ENCODE measurements at regions of chr1 and their contacts with region 1.

Region 1: DNA sequence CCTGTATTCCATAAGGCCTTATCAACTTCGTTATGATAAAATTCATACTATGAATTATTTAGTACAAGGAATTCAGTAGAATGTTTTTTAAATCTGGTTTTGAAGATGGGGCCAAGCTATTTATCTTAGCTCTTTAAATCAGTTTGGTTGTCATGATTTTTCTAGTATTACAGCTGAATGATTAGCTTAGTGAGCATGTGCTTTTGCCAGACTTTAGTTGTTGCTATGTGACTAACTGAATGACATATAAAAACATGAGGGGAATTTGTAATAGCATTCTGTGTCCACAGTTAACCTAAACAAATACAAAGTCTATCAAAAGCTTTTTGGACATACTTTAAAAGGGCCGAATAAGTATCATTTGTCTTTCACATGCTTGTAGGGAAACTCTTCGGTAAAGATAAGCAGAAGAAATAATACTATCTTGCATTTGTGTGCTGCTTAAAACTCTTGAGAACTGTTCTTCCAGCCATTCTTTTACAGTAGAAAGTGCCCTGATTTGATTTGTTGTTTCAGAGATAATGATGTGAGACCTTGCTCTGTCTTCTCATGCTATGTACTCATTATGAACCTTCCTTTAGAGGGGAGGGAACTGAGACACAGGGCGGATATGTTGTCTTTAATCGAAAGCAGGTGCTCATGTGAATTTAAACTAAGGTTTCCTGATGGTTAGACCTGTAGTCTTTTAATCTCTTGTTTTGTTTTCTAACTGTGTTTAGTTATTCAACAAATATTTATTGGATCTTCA is 18.8 kb downstream of the NEK7 start:
- DNase-seq: no peak
- ATAC-seq: peak; percentile 85
- H3K4me3 ChIP-seq: no peak overlapping the region
- H3K27ac ChIP-seq: peak overlapping the region; percentile 45
- H3K4me1 ChIP-seq: peaks cover 26% of the 10 kb centered on the region
- H3K27me3 ChIP-seq: no peaks in the 10 kb centered on the region
- CTCF ChIP-seq: no peak
- EP300 ChIP-seq: no peak
- POLR2A ChIP-seq: no peak
- RAD21 ChIP-seq: no peak

Region 2: DNA sequence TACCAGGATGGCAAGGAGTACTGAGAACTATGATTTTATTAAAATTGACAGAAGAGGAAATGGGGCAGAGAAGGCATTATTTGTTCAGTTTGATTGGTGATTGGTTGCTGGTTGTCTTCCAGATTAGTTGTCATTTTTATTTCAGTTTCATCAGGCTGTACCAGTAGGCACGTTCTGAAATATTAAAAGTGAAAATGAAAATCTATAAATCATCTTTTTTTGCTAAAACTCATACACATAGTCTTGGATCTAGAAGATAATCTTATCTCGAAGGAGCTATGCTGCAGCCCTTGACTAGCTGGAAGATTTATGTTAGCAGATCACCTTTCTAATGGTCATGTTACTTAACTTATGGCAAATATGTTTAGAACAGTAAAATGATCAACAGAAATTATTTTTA is 10.2 kb after region 1 on chr1:
- CTCF ChIA-PET with region 1: interaction called, 10 read pairs
- POLR2A ChIA-PET with region 1: no interaction called
- RAD21 ChIA-PET with region 1: interaction called, 4 read pairs
- SMC1A ChIA-PET with region 1: interaction called, 21 read pairs
- in situ Hi-C with region 1: no loop called
- intact Hi-C with region 1: no loop called
- DNase-seq: no peak
- ATAC-seq: peak; percentile 66
- H3K4me3 ChIP-seq: no peak overlapping the region; the same call in 1 of the 2 replicates
- H3K27ac ChIP-seq: peak overlapping the region; percentile 17; the same call in 1 of the 2 replicates
- H3K4me1 ChIP-seq: no peaks in the 10 kb centered on the region; the same call in 1 of the 2 replicates
- H3K27me3 ChIP-seq: no peaks in the 10 kb centered on the region
- CTCF ChIP-seq: no peak
- EP300 ChIP-seq: no peak
- POLR2A ChIP-seq: no peak
- RAD21 ChIP-seq: no peak

Region 3: GRCh38 chr1:198196630-198197029 is 21.0 kb after region 1 on chr1:
- CTCF ChIA-PET with region 1: interaction called, 4 read pairs
- POLR2A ChIA-PET with region 1: interaction called, 3 read pairs
- RAD21 ChIA-PET with region 1: interaction called, 3 read pairs
- SMC1A ChIA-PET with region 1: interaction called, 12 read pairs
- in situ Hi-C with region 1: no loop called
- intact Hi-C with region 1: no loop called
- DNase-seq: no peak
- ATAC-seq: no peak
- H3K4me3 ChIP-seq: no peak overlapping the region
- H3K27ac ChIP-seq: no peak overlapping the region
- H3K4me1 ChIP-seq: peaks cover 5% of the 10 kb centered on the region; the same call in 1 of the 2 replicates
- H3K27me3 ChIP-seq: no peaks in the 10 kb centered on the region
- CTCF ChIP-seq: no peak
- EP300 ChIP-seq: no peak
- POLR2A ChIP-seq: no peak
- RAD21 ChIP-seq: no peak